Heart left ventricle (tissue), 16 donors: ENCODE measurements at regions of chr5 and their contacts with region 1.

Region 1: DNA sequence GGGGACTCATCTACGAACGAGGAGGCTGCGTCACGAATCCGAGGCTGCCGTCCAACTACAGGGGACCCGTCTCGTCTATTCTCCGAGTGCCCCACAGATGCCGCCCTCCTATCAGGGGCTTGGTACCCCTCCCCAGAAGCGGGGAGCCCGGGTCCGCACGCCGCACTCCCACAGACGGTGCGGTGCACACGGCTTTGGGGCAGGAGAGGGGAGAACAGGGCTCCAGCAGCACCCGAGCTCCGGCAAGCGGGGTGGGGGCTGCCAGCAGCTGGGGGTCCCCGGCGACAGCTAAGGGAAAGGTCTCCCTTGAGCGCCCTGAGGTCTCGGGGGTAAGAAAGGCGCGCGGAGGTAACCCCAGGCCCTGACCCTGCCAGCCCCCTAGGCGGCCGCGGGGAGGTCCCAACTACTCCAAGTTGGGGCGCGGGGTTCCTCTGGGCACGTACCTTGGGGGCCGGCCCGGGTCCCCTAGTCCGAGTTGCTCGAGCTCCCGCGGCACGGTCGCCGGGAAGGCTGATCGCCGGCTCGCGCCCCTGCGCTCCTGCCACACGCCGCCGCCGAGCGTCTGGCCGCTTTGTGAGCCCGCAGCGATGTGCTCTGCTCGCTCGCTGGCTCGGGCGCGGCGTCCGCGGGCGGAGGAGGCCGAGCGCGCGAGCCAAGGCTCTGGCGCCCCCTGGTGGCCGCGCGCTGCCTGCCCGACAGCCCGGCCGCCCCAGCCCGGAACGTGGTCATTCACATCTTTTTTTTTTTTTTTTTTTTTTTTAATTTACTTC is at the start of gene SPOCK1:
- DNase-seq: peak; percentile 68 to 85 (median 73)
- ATAC-seq: peak; percentile 76 to 96 (median 88)
- H3K4me3 ChIP-seq: peak within 1 kb of the TSS; percentile 34 to 65 (median 55)
- H3K27ac ChIP-seq: peak within 1 kb of the TSS in 4 of 12 donors; percentile 22 to 62 (median 43)
- H3K4me1 ChIP-seq: peaks cover 0 to 19% (median 5%) of the 10 kb centered on the region in 12 donors
- H3K27me3 ChIP-seq: peaks cover 0 to 21% (median 6%) of the 10 kb centered on the region in 9 donors
- CTCF ChIP-seq: peak in 11 of 12 donors; percentile 61 to 90 (median 77)
- POLR2A ChIP-seq: peak in 1 of 2 donors; percentile 27
- total RNA-seq, gene SPOCK1: 12.3 to 51.2 (median 21.7) TPM

Region 2: DNA sequence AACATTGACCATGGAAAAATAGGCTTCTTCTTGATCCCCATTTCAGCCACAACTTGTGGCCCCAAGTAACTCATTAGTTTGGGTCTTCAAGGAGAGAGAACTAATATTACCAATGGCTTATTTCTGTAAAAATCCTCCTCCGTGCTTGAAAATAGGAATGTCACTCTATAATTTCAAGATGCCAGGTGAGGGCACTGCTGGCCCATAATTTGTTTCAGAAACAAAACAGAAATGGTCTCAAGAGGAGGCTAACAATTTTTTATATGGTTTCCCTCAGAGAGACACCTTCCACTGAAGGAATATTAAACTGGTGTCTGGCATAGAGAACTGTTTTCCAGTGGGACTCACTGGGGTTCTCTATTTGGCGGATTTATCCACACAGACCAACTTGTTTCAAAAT is 696.5 kb before region 1 on chr5:
- intact Hi-C with region 1: loop called in 9 of 10 experiments (anchors 2 to 10 kb)
- DNase-seq: no peak
- ATAC-seq: peak in 2 of 4 donors; percentile 26 to 55
- H3K4me3 ChIP-seq: no peak overlapping the region
- H3K27ac ChIP-seq: no peak overlapping the region
- H3K4me1 ChIP-seq: no peaks in the 10 kb centered on the region
- H3K27me3 ChIP-seq: peaks cover 0 to 3% (median 0%) of the 10 kb centered on the region in 9 donors
- CTCF ChIP-seq: peak in 9 of 12 donors; percentile 16 to 58 (median 48)
- POLR2A ChIP-seq: no peak

Region 3: GRCh38 chr5:137075163-137075970 is 423.6 kb before region 1 on chr5:
- intact Hi-C with region 1: loop called in 1 of 10 experiments (anchors 5 kb)
- DNase-seq: peak; percentile 31 to 66 (median 44)
- ATAC-seq: peak in 3 of 4 donors; percentile 48 to 67 (median 54)
- H3K4me3 ChIP-seq: no peak overlapping the region
- H3K27ac ChIP-seq: peak overlapping the region in 1 of 12 donors; percentile 9
- H3K4me1 ChIP-seq: peaks cover 0 to 28% (median 16%) of the 10 kb centered on the region in 12 donors
- H3K27me3 ChIP-seq: no peaks in the 10 kb centered on the region
- CTCF ChIP-seq: peak in 11 of 12 donors; percentile 21 to 62 (median 45)
- POLR2A ChIP-seq: no peak

Region 4: DNA sequence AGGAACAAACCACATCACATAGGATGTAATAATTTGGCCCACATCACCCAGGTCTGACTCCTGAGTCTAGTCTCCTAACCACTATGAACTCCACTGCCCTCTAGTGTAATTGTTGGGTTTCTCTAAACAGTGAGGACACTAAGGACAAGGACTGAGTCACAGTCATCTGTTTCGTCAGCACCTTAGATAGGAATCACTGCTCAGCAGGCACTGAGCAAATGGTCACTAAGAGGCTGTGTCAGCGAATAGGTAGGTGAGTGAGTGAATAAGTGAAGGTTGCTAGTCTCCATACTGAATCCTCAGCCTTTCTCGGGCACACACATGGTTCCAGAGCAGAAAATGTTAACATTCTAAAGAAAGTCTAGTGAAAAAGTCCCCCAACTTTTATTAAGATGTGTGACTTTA is 278.4 kb before region 1 on chr5:
- intact Hi-C with region 1: loop called in 1 of 10 experiments (anchors 10 kb)
- DNase-seq: no peak
- ATAC-seq: peak; percentile 55 to 79 (median 74)
- H3K4me3 ChIP-seq: no peak overlapping the region
- H3K27ac ChIP-seq: no peak overlapping the region
- H3K4me1 ChIP-seq: peaks cover 0 to 10% (median 0%) of the 10 kb centered on the region in 12 donors
- H3K27me3 ChIP-seq: no peaks in the 10 kb centered on the region
- CTCF ChIP-seq: peak in 11 of 12 donors; percentile 25 to 59 (median 46)
- POLR2A ChIP-seq: no peak

Region 5: GRCh38 chr5:137282216-137282615 is 216.7 kb before region 1 on chr5:
- intact Hi-C with region 1: no loop called
- DNase-seq: peak in 3 of 5 donors; percentile 34 to 50 (median 48)
- ATAC-seq: peak; percentile 68 to 88 (median 80)
- H3K4me3 ChIP-seq: peak overlapping the region in 2 of 12 donors; percentile 5 to 18
- H3K27ac ChIP-seq: peak overlapping the region in 6 of 12 donors; percentile 39 to 69 (median 60)
- H3K4me1 ChIP-seq: peaks cover 0 to 42% (median 12%) of the 10 kb centered on the region in 12 donors
- H3K27me3 ChIP-seq: no peaks in the 10 kb centered on the region
- CTCF ChIP-seq: no peak
- POLR2A ChIP-seq: no peak

Region 6: GRCh38 chr5:137320056-137321045 is 178.6 kb before region 1 on chr5:
- intact Hi-C with region 1: loop called in 8 of 10 experiments (anchors 1 to 5 kb)
- DNase-seq: no peak
- ATAC-seq: peak in 2 of 4 donors; percentile 23 to 41
- H3K4me3 ChIP-seq: no peak overlapping the region
- H3K27ac ChIP-seq: no peak overlapping the region
- H3K4me1 ChIP-seq: peaks cover 0 to 23% (median 6%) of the 10 kb centered on the region in 12 donors
- H3K27me3 ChIP-seq: peaks cover 0 to 4% (median 0%) of the 10 kb centered on the region in 9 donors
- CTCF ChIP-seq: peak; percentile 70 to 89 (median 76)
- POLR2A ChIP-seq: no peak

Region 7: DNA sequence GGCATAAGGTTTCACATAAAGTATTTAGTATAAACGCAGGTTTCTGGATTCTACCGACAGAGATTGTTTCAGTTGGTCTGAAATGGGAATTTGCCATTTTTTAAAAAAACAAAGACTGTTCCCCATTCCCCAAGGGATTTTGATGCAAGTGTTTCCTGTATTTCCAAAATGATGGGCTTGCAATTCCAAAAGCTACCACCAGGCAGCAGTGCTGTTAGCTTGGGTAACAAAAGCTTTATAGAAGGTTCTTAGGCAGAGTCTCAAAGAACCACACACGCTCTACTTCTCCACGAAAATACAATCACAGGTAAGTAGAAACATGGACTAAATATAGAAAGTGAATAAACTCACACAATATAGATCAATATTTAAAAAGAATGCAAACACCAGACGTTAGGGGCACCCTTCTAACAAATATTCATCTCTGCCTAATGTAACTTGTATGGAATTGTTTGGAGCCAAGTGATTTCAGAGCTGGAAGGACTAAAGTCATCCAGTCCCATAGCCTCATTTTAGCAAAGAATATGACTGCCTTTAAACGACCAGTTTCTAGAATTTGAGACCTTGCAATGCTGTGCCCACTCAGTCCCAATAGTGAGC is 154.1 kb before region 1 on chr5:
- intact Hi-C with region 1: loop called in 3 of 10 experiments (anchors 2 to 5 kb)
- DNase-seq: no peak
- ATAC-seq: peak in 1 of 4 donors; percentile 22
- H3K4me3 ChIP-seq: no peak overlapping the region
- H3K27ac ChIP-seq: no peak overlapping the region
- H3K4me1 ChIP-seq: peaks cover 0 to 22% (median 6%) of the 10 kb centered on the region in 12 donors
- H3K27me3 ChIP-seq: no peaks in the 10 kb centered on the region
- CTCF ChIP-seq: peak; percentile 39 to 71 (median 61)
- POLR2A ChIP-seq: no peak

Region 8: DNA sequence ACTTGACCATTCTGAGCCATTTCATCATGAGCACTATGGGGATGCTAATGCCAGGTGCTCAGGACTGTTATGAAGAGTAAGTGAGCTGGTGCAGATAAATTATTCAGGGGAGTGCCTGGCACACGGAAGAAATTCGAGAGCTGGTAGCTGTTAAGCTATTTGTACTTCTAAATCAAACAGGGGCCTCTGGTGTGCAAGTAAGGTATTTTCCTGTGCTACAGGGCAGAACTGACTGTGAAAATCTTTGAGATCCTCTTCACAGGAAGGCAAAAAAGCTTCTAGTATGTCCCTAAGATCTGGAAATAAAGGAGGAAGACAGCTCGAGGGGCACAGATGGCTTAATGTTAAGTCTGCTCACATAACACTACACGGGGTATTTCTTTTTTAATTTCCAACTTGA is 106.5 kb after region 1 on chr5:
- intact Hi-C with region 1: loop called in 2 of 10 experiments (anchors 10 kb)
- DNase-seq: no peak
- ATAC-seq: peak in 3 of 4 donors; percentile 31 to 64 (median 58)
- H3K4me3 ChIP-seq: no peak overlapping the region
- H3K27ac ChIP-seq: no peak overlapping the region
- H3K4me1 ChIP-seq: no peaks in the 10 kb centered on the region
- H3K27me3 ChIP-seq: peaks cover 0 to 6% (median 0%) of the 10 kb centered on the region in 9 donors
- CTCF ChIP-seq: peak in 5 of 12 donors; percentile 15 to 36 (median 19)
- POLR2A ChIP-seq: no peak

Region 9: DNA sequence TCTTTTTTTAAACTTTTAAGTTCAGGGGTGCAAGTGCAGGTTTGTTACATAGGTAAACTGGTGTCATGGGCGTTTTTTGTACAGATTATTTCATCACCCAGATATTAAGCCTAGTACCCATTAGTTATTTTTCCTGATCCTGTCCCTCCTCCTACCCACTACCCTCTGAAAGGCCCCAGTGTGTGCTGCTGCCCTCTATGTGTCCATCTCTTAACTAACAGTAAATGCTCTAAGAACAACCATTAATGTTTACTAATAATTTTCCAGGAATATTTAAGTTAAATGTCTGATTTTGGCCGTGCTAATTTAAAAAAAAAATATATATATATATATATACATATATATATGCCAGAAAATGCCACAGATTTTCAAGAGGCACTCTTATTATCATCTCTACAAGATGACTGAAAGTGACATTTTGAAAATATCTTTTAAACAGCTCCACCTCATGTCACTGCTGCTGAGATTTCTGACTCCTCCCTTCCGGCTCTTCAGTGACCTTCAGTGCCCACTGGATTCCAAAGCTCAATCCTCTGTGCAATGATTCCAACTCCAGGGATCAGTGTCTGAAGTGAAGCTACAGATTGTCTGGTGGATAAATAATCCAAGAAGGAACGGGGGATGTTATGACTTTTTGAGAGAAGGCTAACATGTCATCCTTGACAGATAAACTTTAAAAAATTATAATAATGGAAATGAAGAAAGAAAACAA is 301.9 kb after region 1 on chr5:
- intact Hi-C with region 1: no loop called
- DNase-seq: peak in 3 of 5 donors; percentile 25 to 40 (median 32)
- ATAC-seq: peak; percentile 53 to 91 (median 85)
- H3K4me3 ChIP-seq: peak overlapping the region in 11 of 12 donors; percentile 37 to 63 (median 53)
- H3K27ac ChIP-seq: peak overlapping the region in 11 of 12 donors; percentile 58 to 84 (median 77)
- H3K4me1 ChIP-seq: peaks cover 0 to 12% (median 0%) of the 10 kb centered on the region in 12 donors
- H3K27me3 ChIP-seq: no peaks in the 10 kb centered on the region
- CTCF ChIP-seq: peak in 2 of 12 donors; percentile 23 to 28
- POLR2A ChIP-seq: no peak